ENCODE measurements at regions of chr5 and their contacts with region 1.

Region 1: DNA sequence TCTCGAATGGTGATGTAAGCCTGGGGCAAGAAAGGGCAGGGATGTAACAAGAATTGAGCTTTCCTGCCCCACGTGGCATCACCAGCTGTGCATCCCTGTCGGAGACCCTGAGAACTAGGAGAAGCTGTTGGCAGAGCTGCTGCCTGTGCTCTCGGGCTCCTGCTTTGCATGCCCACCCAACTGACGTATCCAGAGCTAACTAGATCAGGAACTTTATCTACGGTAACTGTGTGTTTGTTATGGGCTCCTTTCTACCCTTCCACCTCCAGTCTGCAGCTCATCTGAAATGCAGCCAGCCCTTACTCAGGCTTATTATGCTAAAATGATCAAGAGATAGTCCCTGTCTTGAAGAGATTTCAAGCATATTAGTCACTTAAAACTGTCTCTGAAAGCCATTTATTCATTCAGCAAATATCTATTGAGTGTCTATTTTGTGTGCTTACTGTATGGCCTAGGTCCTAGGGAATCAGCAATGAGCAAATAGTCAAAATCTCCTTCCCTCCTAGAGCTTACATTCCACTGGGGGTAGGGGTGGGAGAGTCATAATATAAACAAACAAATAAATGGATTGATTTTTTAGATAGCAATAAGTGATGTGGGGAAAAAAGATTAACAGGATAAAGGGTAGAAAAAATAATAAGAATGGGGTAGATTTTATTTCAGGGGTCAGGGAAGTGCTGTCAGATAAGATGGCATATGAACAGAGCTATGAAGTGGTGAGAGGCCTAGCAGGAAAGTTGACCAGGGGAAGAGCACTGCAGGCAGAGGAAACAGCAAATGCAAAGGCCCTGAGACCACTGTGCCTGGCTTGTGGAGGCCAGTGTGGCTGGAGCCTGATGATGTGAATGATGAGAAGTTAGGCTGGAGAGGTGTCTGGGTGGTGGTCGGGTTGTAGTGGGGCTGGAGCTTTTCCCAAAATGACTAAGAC is 118.2 kb downstream of the GALNT10 start:
- DNase-seq: no peak
- ATAC-seq: no peak

Region 2: DNA sequence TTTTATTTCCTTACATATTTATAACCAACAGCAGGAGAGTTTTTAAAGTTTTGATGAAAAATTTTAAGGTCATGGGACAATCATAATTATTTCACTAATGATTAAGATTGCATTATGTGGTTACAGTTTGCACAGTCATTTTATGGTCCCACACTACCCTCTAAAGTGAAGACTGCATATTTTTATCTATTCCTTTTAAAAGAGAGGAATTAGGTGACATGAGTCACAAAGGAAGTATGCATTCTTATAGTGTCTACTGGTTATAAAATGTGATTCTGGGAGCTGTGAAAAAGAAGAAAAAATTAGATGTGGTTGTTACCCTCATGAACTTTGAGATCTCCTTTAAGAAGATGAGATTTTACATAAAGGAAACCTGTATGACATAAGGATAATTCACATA is 906.2 kb before region 1 on chr5:
- intact Hi-C with region 1: no loop called
- DNase-seq: no peak
- ATAC-seq: no peak

Region 3: DNA sequence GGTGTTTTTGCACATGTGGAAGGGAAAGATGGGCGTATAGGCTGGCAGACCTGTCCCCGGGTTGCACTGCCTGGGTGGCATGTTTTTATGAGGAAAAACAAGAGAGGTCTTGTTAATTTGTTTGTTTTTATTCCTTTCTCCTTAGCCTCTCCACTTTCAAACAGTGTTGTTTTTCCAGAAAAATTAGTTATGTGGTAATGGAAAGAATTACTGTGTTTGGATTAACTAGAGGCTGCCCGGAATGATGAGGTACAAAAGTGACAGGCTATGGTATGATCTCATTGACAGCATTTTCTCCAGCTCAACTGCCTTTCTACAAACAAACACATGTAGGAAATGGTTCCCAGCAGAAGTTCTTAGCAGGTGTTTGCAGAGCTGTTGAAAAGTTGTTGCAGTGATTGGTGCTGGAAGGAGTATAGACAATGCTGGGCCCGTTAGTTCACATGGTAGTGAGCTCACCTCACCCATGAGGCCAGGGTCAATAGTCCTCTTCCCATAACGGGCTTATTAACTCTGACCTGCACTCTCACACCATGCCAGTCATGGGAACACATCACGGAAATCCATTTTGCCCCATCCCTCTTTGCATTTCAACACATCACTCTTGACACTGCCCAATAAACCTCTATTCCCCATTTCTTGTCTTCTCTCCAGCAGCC is 25.8 kb after region 1 on chr5:
- intact Hi-C with region 1: loop called (anchors 2 kb)
- DNase-seq: no peak
- ATAC-seq: peak; percentile 75

Region 4: DNA sequence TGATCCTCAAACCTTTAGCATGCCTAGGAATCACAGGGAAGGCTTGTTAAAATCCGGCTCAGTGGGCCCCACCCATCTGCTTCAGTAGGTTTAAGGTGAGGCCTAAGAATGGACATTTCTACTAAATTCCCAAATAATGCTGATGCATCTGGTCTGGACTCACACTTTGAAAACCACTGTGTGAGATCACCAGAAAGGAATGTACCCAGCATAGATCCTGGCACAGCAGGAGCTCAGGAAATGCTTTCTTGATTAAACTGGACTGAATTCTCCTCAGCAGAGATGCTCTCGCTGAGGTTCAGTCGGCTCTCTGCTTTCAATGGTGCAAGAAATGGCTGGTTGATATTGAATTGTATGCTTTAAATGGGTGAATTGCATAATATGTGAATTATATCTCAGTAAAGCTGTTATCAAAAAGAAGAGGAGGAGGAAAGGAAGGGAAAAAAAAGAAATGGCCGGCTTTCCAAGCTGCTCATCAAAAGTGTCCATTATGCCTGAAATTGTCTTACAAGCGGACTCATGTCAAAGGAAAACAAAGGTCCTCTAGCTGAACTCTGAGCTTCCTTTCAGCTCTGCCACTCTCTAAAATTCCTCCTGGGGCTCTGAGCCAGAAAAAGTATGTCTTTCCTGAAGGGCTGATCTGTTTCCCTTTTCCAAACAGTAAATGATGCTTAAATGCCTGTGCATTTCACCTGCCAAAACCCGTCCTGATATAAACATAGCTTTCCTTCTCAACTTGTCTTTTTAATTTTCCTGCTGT is 59.5 kb after region 1 on chr5:
- intact Hi-C with region 1: no loop called
- DNase-seq: no peak
- ATAC-seq: peak; percentile 89